ENCODE measurements at regions of chr3 and their contacts with region 1.

Region 1: DNA sequence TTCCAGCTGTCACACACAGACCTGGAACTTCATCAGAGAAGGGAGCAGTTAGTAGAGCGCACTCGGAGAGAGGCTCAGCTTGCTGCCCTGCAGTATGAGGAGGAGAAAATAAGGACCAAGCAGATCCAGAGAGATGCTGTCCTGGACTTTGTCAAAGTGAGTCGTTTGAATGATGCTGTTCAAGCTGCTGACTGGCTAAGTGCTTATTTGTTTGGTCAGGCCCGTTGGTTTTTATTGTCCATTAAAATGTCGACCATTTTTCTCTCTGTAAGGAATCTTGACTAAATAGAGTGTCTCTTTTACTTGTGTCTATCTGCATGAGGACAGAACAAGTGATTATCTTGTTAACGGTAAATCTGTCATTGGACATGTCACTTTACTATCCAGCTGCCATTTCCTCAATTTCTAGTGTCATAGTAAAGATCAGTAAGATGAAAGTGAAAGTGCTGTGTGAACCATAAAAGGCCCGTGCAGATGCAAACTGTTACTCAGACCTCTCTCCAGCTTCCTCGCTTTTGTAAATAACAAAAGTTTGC is 56.9 kb downstream of the LRCH3 start:
- DNase-seq: no peak
- ATAC-seq: peak; percentile 62

Region 2: GRCh38 chr3:197761784-197762183 is 86.2 kb before region 1 on chr3:
- intact Hi-C with region 1: loop called (anchors 5 kb)
- DNase-seq: no peak
- ATAC-seq: no peak